Activated T-helper 1 cell treated with anti-CD3 and anti-CD28 coated beads, Interleukin-12 subunit alpha, Interleukin-12 subunit beta, Interleukin-2, Interleukin-4 antibody, amounts not matched to agents 30 ng/mL and 10 ng/mL and 1 ng/mL, durations not matched to agents 14 hours and 24 hours and 36 hours (primary cell): ENCODE measurements at regions of chr9 and their contacts with region 1.

Region 1: GRCh38 chr9:128552153-128552743 is at the start of gene SPTAN1:
- DNase-seq: peak; percentile 93
- H3K4me3 Mint-ChIP-seq: peak within 1 kb of the TSS; percentile 89
- H3K27ac Mint-ChIP-seq: peak within 1 kb of the TSS; percentile 91
- H3K4me1 Mint-ChIP-seq: peaks cover 43% of the 10 kb centered on the region
- H3K27me3 Mint-ChIP-seq: no peaks in the 10 kb centered on the region
- total RNA-seq, gene SPTAN1: 298 and 304 TPM in 2 replicates

Region 2: GRCh38 chr9:128203024-128203706 is 349.1 kb before region 1 on chr9 and contains the start of gene DNM1:
- intact Hi-C with region 1: loop called (anchors 5 kb)
- DNase-seq: peak; percentile 75
- H3K4me3 Mint-ChIP-seq: peak within 1 kb of the TSS; percentile 78
- H3K27ac Mint-ChIP-seq: peak within 1 kb of the TSS; percentile 83
- H3K4me1 Mint-ChIP-seq: peaks cover 21% of the 10 kb centered on the region
- H3K27me3 Mint-ChIP-seq: peaks cover 27% of the 10 kb centered on the region
- total RNA-seq, gene DNM1: 1.4 and 1.8 TPM in 2 replicates

Region 3: GRCh38 chr9:128370826-128371621 is 181.2 kb before region 1 on chr9 and contains the start of gene URM1:
- intact Hi-C with region 1: loop called (anchors 2 kb)
- DNase-seq: peak; percentile 96
- H3K4me3 Mint-ChIP-seq: peak within 1 kb of the TSS; percentile 96
- H3K27ac Mint-ChIP-seq: peak within 1 kb of the TSS; percentile 94
- H3K4me1 Mint-ChIP-seq: peaks cover 33% of the 10 kb centered on the region
- H3K27me3 Mint-ChIP-seq: no peaks in the 10 kb centered on the region
- total RNA-seq, gene URM1: 81.6 and 82.6 TPM in 2 replicates

Region 4: GRCh38 chr9:128523199-128523925 is 28.9 kb before region 1 on chr9:
- intact Hi-C with region 1: no loop called
- DNase-seq: no peak
- H3K4me3 Mint-ChIP-seq: no peak overlapping the region
- H3K27ac Mint-ChIP-seq: no peak overlapping the region
- H3K4me1 Mint-ChIP-seq: no peaks in the 10 kb centered on the region
- H3K27me3 Mint-ChIP-seq: no peaks in the 10 kb centered on the region

Region 5: GRCh38 chr9:128587453-128587852 is 35.2 kb after region 1 on chr9:
- intact Hi-C with region 1: loop called (anchors 2 kb)
- DNase-seq: peak; percentile 58
- H3K4me3 Mint-ChIP-seq: peak overlapping the region; percentile 16
- H3K27ac Mint-ChIP-seq: peak overlapping the region; percentile 70
- H3K4me1 Mint-ChIP-seq: peaks cover 11% of the 10 kb centered on the region
- H3K27me3 Mint-ChIP-seq: no peaks in the 10 kb centered on the region

Region 6: GRCh38 chr9:128677794-128678193 is 125.5 kb after region 1 on chr9:
- intact Hi-C with region 1: no loop called
- DNase-seq: no peak
- H3K4me3 Mint-ChIP-seq: no peak overlapping the region
- H3K27ac Mint-ChIP-seq: no peak overlapping the region
- H3K4me1 Mint-ChIP-seq: no peaks in the 10 kb centered on the region
- H3K27me3 Mint-ChIP-seq: no peaks in the 10 kb centered on the region

Region 7: GRCh38 chr9:128771745-128772519 is 219.7 kb after region 1 on chr9 and contains the start of gene ZER1:
- intact Hi-C with region 1: loop called (anchors 10 kb)
- DNase-seq: peak; percentile 92
- H3K4me3 Mint-ChIP-seq: peak within 1 kb of the TSS; percentile 98
- H3K27ac Mint-ChIP-seq: peak within 1 kb of the TSS; percentile 95
- H3K4me1 Mint-ChIP-seq: peaks cover 14% of the 10 kb centered on the region
- H3K27me3 Mint-ChIP-seq: no peaks in the 10 kb centered on the region
- total RNA-seq, gene ZER1: 21.1 and 21.5 TPM in 2 replicates

Region 8: GRCh38 chr9:128947422-128948301 is 395.4 kb after region 1 on chr9 and contains the starts of genes DOLK and NUP188:
- intact Hi-C with region 1: loop called (anchors 5 kb)
- DNase-seq: peak; percentile 99
- H3K4me3 Mint-ChIP-seq: peak within 1 kb of the TSS; percentile 98
- H3K27ac Mint-ChIP-seq: peak within 1 kb of the TSS; percentile 99
- H3K4me1 Mint-ChIP-seq: peaks cover 37% of the 10 kb centered on the region
- H3K27me3 Mint-ChIP-seq: no peaks in the 10 kb centered on the region
- total RNA-seq, gene DOLK: 17.7 and 18.1 TPM in 2 replicates
- total RNA-seq, gene NUP188: 154 and 158 TPM in 2 replicates

Region 9: DNA sequence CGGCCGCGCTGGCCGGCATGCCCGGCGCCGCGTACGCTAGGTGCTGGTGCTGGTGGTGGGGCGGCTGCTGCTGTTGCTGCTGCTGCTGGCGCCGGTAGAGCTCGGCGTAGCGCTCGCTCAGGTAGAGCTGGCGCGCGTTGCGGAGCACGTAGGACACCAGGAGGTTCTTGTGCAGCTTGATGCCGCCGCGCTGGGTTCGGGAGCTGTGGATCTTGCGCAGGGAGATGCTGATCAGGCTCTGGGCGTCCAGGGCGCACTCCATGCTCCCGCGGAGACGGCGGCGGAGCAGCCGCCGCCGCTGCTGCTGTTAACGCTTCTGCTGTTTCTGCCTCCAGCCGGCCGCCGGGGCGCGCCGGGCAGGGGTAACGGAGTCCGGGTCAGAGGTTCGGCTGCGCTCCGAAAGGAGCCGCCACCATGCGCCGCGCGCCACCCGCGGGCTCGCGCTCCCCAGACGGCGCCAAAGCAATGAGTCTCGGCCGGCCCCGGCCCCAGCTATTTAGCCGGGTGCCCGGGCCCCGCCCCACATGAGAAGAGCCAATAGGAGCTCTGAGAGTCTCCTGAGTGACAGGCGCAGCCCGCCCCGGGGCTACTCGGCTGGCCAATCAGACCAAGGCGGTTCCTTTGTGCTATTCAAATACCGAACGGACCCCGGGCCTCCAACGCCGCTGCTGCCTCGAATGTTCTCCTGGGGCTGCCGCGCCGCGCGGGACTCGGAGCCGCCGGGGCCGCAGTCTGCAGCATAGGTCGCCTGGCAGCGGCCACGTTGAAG is 625.7 kb after region 1 on chr9 and contains the start of gene IER5L:
- intact Hi-C with region 1: loop called (anchors 5 kb)
- DNase-seq: peak; percentile 93
- H3K4me3 Mint-ChIP-seq: peak within 1 kb of the TSS; percentile 91
- H3K27ac Mint-ChIP-seq: peak within 1 kb of the TSS; percentile 61
- H3K4me1 Mint-ChIP-seq: peaks cover 16% of the 10 kb centered on the region
- H3K27me3 Mint-ChIP-seq: peaks cover 7% of the 10 kb centered on the region
- total RNA-seq, gene IER5L: 14.4 TPM in 2 replicates